H1 (cell line): ENCODE measurements at regions of chr6 and their contacts with region 1.

Region 1: GRCh38 chr6:151014404-151015100 is 149.1 kb downstream of the MTHFD1L start:
- DNase-seq: peak; percentile 34 to 80
- H3K4me3 ChIP-seq: no peak overlapping the region
- H3K27ac ChIP-seq: no peak overlapping the region
- H3K4me1 ChIP-seq: peaks cover 0 to 5% (median 1%) of the 10 kb centered on the region in 4 experiments; a peak in 2 of 7 replicates
- H3K27me3 ChIP-seq: no peaks in the 10 kb centered on the region
- CTCF ChIP-seq: peak; percentile 75 to 96 (median 87)
- EP300 ChIP-seq: no peak
- POLR2A ChIP-seq: no peak
- RAD21 ChIP-seq: peak; percentile 93 to 95

Region 2: DNA sequence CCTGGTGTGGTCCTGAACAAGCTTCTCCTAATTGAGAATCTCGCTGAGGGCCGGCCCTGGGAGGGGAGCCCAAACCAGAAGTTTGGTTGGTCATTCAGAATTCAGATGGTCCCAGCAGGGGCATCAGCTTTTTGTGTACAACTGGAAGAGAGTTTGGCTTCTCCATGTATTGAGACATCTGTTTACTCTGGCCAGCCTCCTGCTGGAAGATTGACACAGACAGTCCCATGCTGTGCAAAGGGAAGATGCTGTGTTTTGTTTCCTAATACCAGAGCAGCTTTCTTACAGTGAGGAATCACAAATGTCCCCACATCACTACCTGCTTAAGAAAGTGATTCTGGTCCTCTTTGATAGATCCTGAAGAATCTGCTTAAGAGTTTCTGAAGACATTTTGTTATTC is 317.0 kb before region 1 on chr6:
- CTCF ChIA-PET with region 1: no interaction called
- POLR2A ChIA-PET with region 1: no interaction called
- DNase-seq: no peak
- H3K4me3 ChIP-seq: no peak overlapping the region
- H3K27ac ChIP-seq: no peak overlapping the region
- H3K4me1 ChIP-seq: no peaks in the 10 kb centered on the region
- H3K27me3 ChIP-seq: no peaks in the 10 kb centered on the region; a peak in 1 of 7 replicates
- CTCF ChIP-seq: no peak
- EP300 ChIP-seq: no peak
- POLR2A ChIP-seq: no peak
- RAD21 ChIP-seq: no peak

Region 3: GRCh38 chr6:150999107-150999506 is 15.4 kb before region 1 on chr6:
- CTCF ChIA-PET with region 1: interaction called, 11 read pairs
- POLR2A ChIA-PET with region 1: interaction called, 4 read pairs
- DNase-seq: no peak
- H3K4me3 ChIP-seq: no peak overlapping the region
- H3K27ac ChIP-seq: no peak overlapping the region
- H3K4me1 ChIP-seq: no peaks in the 10 kb centered on the region; a peak in 3 of 7 replicates
- H3K27me3 ChIP-seq: no peaks in the 10 kb centered on the region
- CTCF ChIP-seq: no peak
- EP300 ChIP-seq: no peak
- POLR2A ChIP-seq: no peak
- RAD21 ChIP-seq: no peak

Region 4: DNA sequence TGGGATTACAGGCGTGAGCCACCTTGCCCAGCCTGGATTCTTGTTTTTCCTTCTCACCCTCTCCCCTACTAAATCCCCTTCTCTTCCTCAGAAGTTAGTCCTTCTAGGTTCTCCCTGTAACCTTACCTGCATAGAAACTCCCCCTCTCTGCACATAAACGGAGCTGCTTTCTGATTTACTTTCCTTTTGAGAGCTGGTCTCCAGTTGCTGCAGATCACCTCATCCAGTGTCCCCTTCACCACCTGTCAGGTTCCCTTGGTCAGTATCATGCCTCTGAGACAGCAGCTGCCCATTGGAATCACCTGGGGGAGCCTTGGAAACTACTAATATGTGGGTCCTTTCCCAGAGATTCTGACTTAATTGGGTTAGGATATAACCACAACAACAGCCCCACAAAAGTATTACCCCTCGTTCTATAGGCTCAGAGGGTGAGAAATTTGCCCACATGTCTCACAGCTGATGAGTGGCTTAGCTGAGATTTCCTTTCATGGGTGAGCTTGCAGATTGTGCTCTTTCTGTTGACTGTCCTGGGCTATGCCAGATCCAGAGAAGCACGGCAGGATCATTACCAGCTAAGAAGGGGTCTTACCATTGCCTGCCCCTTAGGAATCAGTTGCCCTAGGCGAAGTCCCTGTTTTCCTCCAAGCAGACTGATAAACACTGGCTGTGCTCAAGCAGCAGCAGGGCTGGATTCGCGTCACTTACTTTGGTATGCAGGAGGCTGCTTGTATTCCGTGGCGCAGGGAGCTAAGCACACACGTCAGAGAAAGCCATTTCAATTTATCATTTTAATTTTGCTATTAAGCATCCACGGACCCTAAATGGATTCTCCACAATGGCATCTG is 276.5 kb after region 1 on chr6:
- CTCF ChIA-PET with region 1: interaction called, 10 read pairs
- POLR2A ChIA-PET with region 1: no interaction called
- DNase-seq: no peak
- H3K4me3 ChIP-seq: no peak overlapping the region
- H3K27ac ChIP-seq: no peak overlapping the region
- H3K4me1 ChIP-seq: peaks cover 0 to 5% (median 2%) of the 10 kb centered on the region in 4 experiments; a peak in 5 of 7 replicates
- H3K27me3 ChIP-seq: no peaks in the 10 kb centered on the region
- CTCF ChIP-seq: no peak
- EP300 ChIP-seq: no peak
- POLR2A ChIP-seq: no peak
- RAD21 ChIP-seq: no peak

Region 5: DNA sequence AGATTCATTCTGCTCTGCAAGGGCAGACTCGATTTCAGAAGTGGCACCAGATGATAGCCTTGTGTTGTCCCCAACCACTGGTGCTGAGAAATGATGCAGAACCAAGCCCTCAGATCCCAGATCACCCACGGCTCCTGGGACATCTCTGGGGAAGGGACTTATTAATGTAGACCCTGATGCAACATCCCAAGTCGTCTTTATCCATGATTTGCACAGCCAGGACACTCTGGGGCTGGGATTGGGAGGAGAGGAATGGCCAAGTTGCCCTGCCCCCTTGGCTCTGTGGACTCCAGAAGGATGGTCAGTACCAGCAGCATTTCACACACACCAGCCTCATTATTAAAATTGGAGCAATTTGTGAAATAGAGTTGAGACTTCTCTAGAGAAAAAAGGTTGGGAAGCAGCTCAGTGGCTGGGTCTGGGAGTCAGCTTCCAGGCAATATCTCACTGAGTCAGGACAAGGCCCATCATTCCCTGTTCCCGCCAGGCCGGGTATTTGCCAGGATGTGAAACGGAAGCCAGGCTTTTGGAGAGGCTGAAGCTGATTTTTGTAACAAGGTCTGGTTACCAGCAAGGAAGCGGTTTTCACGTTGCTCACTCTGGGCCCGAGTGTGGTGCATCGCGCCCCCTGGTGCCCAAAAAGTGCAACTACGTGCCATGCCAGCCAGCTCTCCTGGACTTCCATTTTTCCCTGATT is 309.4 kb after region 1 on chr6:
- CTCF ChIA-PET with region 1: interaction called, 133 read pairs
- POLR2A ChIA-PET with region 1: interaction called, 3 read pairs
- DNase-seq: peak; percentile 63 to 97
- H3K4me3 ChIP-seq: no peak overlapping the region
- H3K27ac ChIP-seq: no peak overlapping the region
- H3K4me1 ChIP-seq: peaks cover 0 to 3% (median 0%) of the 10 kb centered on the region in 4 experiments; a peak in 3 of 7 replicates
- H3K27me3 ChIP-seq: peaks cover 0 to 6% (median 1%) of the 10 kb centered on the region in 4 experiments; a peak in 2 of 7 replicates
- CTCF ChIP-seq: peak; percentile 91 to 99 (median 98)
- EP300 ChIP-seq: no peak
- POLR2A ChIP-seq: no peak
- RAD21 ChIP-seq: peak; percentile 95 to 99

Region 6: DNA sequence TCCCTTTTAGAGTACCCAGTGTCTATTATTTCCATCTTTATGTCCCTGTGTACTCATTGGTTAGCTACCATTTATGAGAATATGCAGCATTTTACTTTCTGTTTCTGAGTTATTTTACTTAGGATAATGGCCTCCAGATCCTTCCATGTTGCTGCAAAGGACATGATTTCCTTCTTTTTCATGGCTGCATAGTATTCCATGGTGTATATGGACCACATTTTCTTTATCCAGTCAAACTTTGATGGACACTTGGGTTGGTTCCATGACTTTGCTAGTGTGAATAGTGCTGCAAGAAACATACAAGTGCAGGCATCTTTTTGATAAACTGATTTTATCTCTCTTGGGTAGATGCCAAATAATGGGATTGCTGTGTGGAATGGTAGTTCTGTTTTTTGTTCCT is 321.4 kb after region 1 on chr6:
- CTCF ChIA-PET with region 1: interaction called, 45 read pairs
- POLR2A ChIA-PET with region 1: interaction called, 3 read pairs
- DNase-seq: no peak
- H3K4me3 ChIP-seq: no peak overlapping the region
- H3K27ac ChIP-seq: no peak overlapping the region
- H3K4me1 ChIP-seq: 0 out of 7 replicates have a peak, but pooled peaks cover 0 to 2% (median 0%) of the 10 kb centered on the region in 4 experiments
- H3K27me3 ChIP-seq: no peaks in the 10 kb centered on the region
- CTCF ChIP-seq: no peak
- EP300 ChIP-seq: no peak
- POLR2A ChIP-seq: no peak
- RAD21 ChIP-seq: no peak